ENCODE measurements at regions of chr3 and their contacts with region 1.

Region 1: DNA sequence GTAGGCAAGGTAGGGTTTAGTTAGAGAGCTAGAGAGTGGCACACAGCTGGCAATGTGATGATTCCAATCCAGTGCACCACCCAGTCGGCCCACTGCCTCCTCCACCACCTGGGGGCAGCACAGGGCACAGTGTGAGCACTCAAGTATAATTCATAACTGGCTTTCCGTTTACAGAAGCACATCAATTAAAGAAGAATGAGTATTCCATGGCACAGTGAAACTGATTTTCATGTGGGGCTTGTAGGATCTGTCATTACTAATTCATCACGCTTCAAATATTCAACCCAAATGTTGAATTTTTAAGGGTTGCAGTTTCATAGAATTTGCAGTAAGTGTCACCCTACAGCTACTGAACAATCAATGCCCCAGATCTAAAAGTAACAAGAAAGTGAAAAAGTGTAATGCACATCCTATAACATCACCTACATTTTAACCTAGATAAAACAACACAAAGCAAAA is 149.9 kb downstream of the IGSF11 start:
- DNase-seq: peak; percentile 63 to 74 (median 68)
- H3K4me3 ChIP-seq: no peak overlapping the region
- H3K4me3 Mint-ChIP-seq: peak overlapping the region in 1 of 8 donors; percentile 59
- H3K27ac ChIP-seq: no peak overlapping the region
- H3K27ac Mint-ChIP-seq: no peak overlapping the region
- H3K4me1 ChIP-seq: no peaks in the 10 kb centered on the region
- H3K4me1 Mint-ChIP-seq: peaks cover 0 to 7% (median 4%) of the 10 kb centered on the region in 4 donors
- H3K27me3 ChIP-seq: no peaks in the 10 kb centered on the region
- H3K27me3 Mint-ChIP-seq: peaks cover 2 to 8% of the 10 kb centered on the region in 2 donors

Region 2: GRCh38 chr3:118636841-118637240 is 247.9 kb before region 1 on chr3:
- CTCF ChIA-PET with region 1: no interaction called
- POLR2A ChIA-PET with region 1: no interaction called
- intact Hi-C with region 1: no loop called
- DNase-seq: no peak
- H3K4me3 ChIP-seq: no peak overlapping the region
- H3K4me3 Mint-ChIP-seq: no peak overlapping the region
- H3K27ac ChIP-seq: no peak overlapping the region
- H3K27ac Mint-ChIP-seq: no peak overlapping the region
- H3K4me1 ChIP-seq: no peaks in the 10 kb centered on the region
- H3K4me1 Mint-ChIP-seq: no peaks in the 10 kb centered on the region
- H3K27me3 ChIP-seq: no peaks in the 10 kb centered on the region
- H3K27me3 Mint-ChIP-seq: peaks cover 0 to 4% of the 10 kb centered on the region in 2 donors

Region 3: DNA sequence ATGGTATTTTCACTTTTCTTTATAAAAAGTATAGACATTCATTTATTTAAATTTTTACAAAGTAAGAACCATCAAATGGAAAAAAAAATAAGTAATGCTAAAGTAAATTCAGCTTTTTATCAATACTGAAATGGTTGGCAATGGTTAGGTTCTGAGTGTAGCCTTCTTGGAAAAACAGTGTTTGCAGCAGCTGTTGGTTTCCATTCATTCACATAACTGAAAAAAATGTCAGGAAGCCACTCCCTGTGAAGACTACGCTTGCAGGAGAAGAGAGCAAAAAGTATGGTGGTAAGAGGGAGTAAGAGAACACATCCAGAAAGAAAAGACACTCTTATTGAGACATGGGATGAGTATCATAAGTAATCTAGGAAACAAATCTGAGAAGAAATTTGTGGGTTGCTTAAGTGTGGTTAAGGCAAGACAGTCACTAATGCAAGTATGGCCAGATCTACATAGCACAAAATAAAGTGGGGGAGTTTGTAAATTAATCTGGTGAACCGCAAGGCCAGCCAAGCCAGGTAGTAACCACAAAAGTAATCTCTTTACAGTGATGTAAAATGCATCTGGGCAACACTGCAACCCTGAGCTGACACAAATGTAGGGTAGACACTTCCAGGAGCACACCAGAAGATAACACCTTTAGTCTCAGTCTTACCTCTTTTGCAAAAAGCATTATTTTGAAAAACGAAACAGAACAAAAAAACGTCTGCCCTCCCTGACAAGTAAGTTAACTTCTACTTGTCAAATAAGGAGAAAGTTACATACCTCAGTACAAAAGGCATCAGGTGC is 16.2 kb after region 1 on chr3:
- CTCF ChIA-PET with region 1: interaction called, 17 read pairs
- POLR2A ChIA-PET with region 1: no interaction called
- intact Hi-C with region 1: no loop called
- DNase-seq: no peak
- H3K4me3 ChIP-seq: no peak overlapping the region
- H3K4me3 Mint-ChIP-seq: no peak overlapping the region
- H3K27ac ChIP-seq: no peak overlapping the region
- H3K27ac Mint-ChIP-seq: no peak overlapping the region
- H3K4me1 ChIP-seq: peaks cover 4% of the 10 kb centered on the region
- H3K4me1 Mint-ChIP-seq: peaks cover 3 to 8% (median 6%) of the 10 kb centered on the region in 4 donors
- H3K27me3 ChIP-seq: no peaks in the 10 kb centered on the region
- H3K27me3 Mint-ChIP-seq: peaks cover 0 to 2% of the 10 kb centered on the region in 2 donors

Region 4: DNA sequence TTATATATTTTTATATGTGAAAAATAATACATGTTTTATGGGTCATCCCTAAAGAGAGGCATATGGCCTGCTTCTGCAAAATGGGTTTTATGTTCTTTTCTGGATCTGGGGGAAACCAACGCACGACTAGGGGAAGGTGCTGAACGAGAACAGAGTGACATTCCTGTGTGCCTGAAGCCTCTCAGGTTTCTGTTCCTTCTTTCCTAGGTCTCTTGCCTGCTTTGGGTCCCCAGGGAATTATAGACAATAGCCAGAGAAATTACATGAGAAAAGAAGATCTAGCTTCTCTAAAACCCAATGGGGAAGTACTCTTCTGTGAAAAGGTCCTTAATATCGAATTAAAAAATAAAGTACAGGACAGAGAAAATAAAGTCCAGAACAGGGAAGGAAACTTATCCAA is 83.3 kb after region 1 on chr3:
- CTCF ChIA-PET with region 1: interaction called, 11 read pairs
- POLR2A ChIA-PET with region 1: no interaction called
- intact Hi-C with region 1: no loop called
- DNase-seq: no peak
- H3K4me3 ChIP-seq: no peak overlapping the region
- H3K4me3 Mint-ChIP-seq: no peak overlapping the region
- H3K27ac ChIP-seq: no peak overlapping the region
- H3K27ac Mint-ChIP-seq: no peak overlapping the region
- H3K4me1 ChIP-seq: no peaks in the 10 kb centered on the region
- H3K4me1 Mint-ChIP-seq: peaks cover 0 to 1% (median 0%) of the 10 kb centered on the region in 4 donors
- H3K27me3 ChIP-seq: no peaks in the 10 kb centered on the region
- H3K27me3 Mint-ChIP-seq: peaks cover 0 to 1% of the 10 kb centered on the region in 2 donors

Region 5: DNA sequence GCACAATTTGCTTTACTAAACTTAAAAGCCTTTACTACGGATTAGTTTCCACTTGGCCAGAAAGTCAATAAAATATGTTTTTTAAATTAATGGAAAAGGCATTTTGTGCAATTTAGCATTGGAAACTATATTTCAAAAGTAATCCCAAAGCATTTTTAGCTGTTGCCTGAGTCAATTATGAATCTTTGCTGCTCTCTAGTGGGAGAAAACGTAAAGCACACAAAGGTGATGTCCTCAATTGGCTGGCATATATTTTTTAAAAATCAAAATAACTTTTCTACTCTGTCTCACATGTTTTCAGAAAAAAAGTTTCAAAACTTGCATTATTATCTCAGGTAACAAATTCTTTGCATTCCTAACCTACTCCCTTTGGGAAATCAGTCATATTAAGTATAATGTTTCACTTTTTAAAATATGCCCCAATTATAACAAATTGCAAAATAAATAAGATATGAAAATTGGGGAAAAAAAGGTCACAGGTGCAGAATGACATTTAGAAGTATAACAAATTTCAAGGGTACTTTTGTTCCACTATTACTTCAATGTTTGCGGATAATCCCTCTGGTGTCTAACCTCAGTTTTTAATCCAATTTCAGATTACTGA is 213.9 kb after region 1 on chr3:
- CTCF ChIA-PET with region 1: interaction called, 279 read pairs
- POLR2A ChIA-PET with region 1: no interaction called
- intact Hi-C with region 1: loop called (anchors 1 kb)
- DNase-seq: peak in 4 of 5 donors; percentile 35 to 58 (median 42)
- H3K4me3 ChIP-seq: no peak overlapping the region
- H3K4me3 Mint-ChIP-seq: no peak overlapping the region
- H3K27ac ChIP-seq: no peak overlapping the region
- H3K27ac Mint-ChIP-seq: no peak overlapping the region
- H3K4me1 ChIP-seq: no peaks in the 10 kb centered on the region
- H3K4me1 Mint-ChIP-seq: no peaks in the 10 kb centered on the region
- H3K27me3 ChIP-seq: no peaks in the 10 kb centered on the region
- H3K27me3 Mint-ChIP-seq: peaks cover 0 to 2% of the 10 kb centered on the region in 2 donors

Region 6: DNA sequence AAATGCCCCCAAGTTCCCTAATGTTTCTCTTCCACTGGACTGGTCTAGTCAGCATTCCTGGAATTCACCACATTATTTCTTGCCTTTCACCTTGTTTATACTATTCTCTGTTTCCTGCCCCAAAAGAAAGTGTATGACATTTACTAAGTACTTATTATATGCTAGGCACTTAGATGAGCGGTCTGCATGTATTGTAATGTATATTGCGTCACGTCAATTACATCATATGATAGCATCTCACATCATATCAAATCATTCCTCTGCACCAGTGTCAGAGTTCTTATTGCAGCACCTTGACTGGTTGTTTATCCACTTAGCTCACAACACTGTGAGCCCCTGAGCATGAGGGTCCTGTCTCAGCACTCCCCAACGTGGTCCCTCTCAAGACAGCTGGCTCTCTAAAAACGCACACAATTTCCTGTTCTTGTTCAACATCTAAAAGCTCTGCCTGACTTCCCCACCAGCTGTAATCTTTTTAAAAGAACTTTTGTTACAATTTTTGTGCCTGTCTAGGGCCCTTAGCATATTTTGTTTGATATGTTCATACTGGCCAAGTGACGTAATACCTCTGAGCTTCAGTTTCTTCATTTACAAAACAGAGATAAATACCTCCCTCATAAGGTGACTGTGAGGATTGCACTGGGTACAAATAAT is 468.2 kb after region 1 on chr3:
- CTCF ChIA-PET with region 1: interaction called, 10 read pairs
- POLR2A ChIA-PET with region 1: interaction called, 3 read pairs
- intact Hi-C with region 1: loop called (anchors 5 kb)
- DNase-seq: peak in 4 of 5 donors; percentile 32 to 49 (median 38)
- H3K4me3 ChIP-seq: no peak overlapping the region
- H3K4me3 Mint-ChIP-seq: peak overlapping the region in 3 of 8 donors; percentile 19 to 46 (median 44)
- H3K27ac ChIP-seq: no peak overlapping the region
- H3K27ac Mint-ChIP-seq: peak overlapping the region in 5 of 7 donors; percentile 8 to 70 (median 42)
- H3K4me1 ChIP-seq: peaks cover 24% of the 10 kb centered on the region
- H3K4me1 Mint-ChIP-seq: peaks cover 25 to 34% (median 27%) of the 10 kb centered on the region in 4 donors
- H3K27me3 ChIP-seq: no peaks in the 10 kb centered on the region
- H3K27me3 Mint-ChIP-seq: no peaks in the 10 kb centered on the region

Region 7: GRCh38 chr3:120198305-120198878 is 1313.6 kb after region 1 on chr3:
- CTCF ChIA-PET with region 1: no interaction called
- POLR2A ChIA-PET with region 1: no interaction called
- intact Hi-C with region 1: no loop called
- DNase-seq: peak in 1 of 5 donors; percentile 6
- H3K4me3 ChIP-seq: no peak overlapping the region
- H3K4me3 Mint-ChIP-seq: no peak overlapping the region
- H3K27ac ChIP-seq: no peak overlapping the region
- H3K27ac Mint-ChIP-seq: no peak overlapping the region
- H3K4me1 ChIP-seq: no peaks in the 10 kb centered on the region
- H3K4me1 Mint-ChIP-seq: no peaks in the 10 kb centered on the region
- H3K27me3 ChIP-seq: no peaks in the 10 kb centered on the region
- H3K27me3 Mint-ChIP-seq: no peaks in the 10 kb centered on the region

Region 8: DNA sequence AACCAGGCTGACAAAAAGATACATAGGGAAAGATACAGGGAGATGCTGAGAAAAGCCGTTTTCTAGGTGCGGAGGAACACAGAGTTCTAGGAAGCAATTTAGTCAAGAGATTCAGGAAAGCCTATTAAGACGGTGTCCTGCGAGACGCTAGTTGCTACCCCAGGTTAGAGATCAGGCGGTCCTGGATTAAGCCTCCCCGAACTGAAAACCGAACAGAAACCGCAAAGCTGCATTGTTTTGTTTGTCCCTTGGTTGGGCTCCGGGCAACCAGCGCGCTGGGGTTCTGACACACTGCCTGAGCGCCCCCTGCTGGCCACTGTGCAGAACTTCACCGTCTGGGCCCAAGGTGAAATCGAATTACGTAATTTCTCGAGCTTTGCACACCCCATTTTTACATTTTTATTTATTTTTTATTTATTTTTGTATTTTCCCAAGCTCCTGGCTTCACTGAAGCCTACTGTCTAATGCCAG is 1674.0 kb after region 1 on chr3:
- CTCF ChIA-PET with region 1: interaction called, 4 read pairs
- POLR2A ChIA-PET with region 1: no interaction called
- intact Hi-C with region 1: loop called (anchors 5 kb)
- DNase-seq: peak; percentile 85 to 91 (median 89)
- H3K4me3 ChIP-seq: peak overlapping the region in 1 of 2 donors; percentile 33
- H3K4me3 Mint-ChIP-seq: peak overlapping the region; percentile 74 to 88 (median 82)
- H3K27ac ChIP-seq: peak overlapping the region; percentile 36
- H3K27ac Mint-ChIP-seq: peak overlapping the region; percentile 69 to 96 (median 93)
- H3K4me1 ChIP-seq: peaks cover 11% of the 10 kb centered on the region
- H3K4me1 Mint-ChIP-seq: peaks cover 11 to 24% (median 13%) of the 10 kb centered on the region in 4 donors
- H3K27me3 ChIP-seq: no peaks in the 10 kb centered on the region
- H3K27me3 Mint-ChIP-seq: peaks cover 1% of the 10 kb centered on the region in 2 donors